Activated T-helper 1 cell treated with anti-CD3 and anti-CD28 coated beads, Interleukin-12 subunit alpha, Interleukin-12 subunit beta, Interleukin-2, Interleukin-4 antibody, amounts not matched to agents 30 ng/mL and 10 ng/mL and 1 ng/mL, durations not matched to agents 14 hours and 24 hours and 36 hours (primary cell): ENCODE measurements at regions of chrX and their contacts with region 1.

Region 1: GRCh38 chrX:93874554-93874953 is 200.5 kb downstream of the FAM133A start:
- DNase-seq: no peak
- H3K4me3 Mint-ChIP-seq: no peak overlapping the region
- H3K27ac Mint-ChIP-seq: no peak overlapping the region
- H3K4me1 Mint-ChIP-seq: no peaks in the 10 kb centered on the region
- H3K27me3 Mint-ChIP-seq: no peaks in the 10 kb centered on the region

Region 2: DNA sequence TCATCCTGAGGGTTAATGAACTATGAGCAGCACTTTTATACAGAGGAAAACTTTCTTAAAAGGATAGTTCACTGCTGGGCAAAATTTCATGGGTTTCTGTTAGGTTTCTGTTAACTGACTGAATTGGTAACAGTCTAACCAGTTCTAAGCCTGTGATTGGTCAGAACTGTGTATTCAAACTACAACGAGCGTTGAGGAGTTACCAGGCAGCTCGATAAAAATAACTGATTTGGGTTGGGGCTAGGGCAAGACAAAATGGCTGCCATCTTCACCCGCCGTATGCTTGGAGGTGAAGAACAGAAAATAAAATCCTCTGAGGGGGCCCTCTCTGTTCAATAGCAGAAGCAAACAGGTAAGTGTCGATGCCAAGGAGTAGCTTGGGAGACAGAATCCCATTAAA is 178.6 kb before region 1 on chrX:
- intact Hi-C with region 1: no loop called
- DNase-seq: no peak
- H3K4me3 Mint-ChIP-seq: no peak overlapping the region
- H3K27ac Mint-ChIP-seq: no peak overlapping the region
- H3K4me1 Mint-ChIP-seq: no peaks in the 10 kb centered on the region
- H3K27me3 Mint-ChIP-seq: no peaks in the 10 kb centered on the region

Region 3: DNA sequence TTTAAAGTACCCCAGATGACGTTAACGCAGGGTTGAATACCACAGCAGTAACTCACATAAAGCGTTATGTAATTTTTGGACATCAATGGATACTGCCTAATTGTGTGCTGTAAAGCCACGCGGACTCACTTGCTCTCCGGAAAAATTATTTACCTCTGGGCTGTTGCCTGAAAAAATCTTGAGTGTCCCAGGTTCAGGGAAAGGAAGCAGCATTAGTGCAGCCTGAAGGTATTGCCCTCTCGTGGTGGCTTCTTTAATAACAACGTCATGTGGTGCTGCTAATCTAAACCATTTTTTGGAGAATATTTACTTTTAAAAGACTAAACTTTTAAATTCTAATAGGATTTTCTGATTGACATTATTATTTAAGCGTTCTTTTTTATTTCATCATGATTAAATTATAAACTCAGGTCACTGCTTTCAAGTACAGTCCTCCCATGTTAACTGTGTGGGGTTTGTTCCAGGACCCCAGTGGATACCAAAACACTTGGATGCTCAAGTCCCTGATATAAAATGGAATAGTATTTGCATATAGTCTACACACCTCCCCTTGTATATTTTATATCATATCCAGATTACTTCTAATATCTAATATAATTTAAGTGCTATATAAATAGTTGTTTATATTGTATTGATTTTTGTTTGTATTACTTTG is 184.3 kb after region 1 on chrX:
- intact Hi-C with region 1: loop called (anchors 10 kb)
- DNase-seq: no peak
- H3K4me3 Mint-ChIP-seq: no peak overlapping the region
- H3K27ac Mint-ChIP-seq: no peak overlapping the region
- H3K4me1 Mint-ChIP-seq: no peaks in the 10 kb centered on the region
- H3K27me3 Mint-ChIP-seq: no peaks in the 10 kb centered on the region